WTC11 (cell line): ENCODE measurements at regions of chr14 and their contacts with region 1.

Region 1: DNA sequence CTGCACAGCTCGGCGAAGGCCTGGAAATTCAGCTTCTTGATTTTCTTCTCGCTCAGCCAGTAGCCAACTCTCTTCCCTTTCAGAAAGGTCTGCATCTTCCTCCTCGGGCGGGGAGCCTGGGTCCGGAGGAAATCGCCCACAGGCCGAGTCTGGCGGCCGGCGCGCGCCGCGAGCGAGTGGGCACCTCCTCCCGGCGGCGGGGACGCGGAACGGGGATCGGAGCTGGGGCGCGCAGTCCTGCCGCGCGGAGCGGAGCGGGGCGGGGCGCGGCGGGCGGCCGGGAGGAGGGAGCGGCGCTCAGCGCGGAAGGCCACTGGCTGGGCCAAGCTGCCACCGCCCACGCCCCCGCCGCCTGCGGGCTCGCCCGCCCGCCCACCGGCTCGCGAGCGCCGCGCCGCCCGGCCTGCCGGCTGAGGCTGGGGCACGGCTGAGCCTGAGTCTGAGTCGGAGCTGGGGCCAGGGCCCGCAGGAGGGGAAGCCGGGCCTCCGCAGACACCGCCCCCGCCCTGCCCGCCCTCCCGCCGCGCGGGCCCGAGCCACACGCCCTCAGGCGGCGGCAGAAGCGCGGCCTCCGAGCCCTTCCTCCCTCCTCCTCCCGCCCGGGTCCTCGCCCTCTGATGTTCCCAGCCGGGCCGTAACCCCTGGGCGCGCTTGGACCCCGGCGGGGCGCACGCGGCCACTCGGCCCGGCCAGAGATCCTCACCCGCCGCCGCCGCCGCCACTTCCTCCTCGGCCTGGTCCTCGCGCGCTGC is 480 bp downstream of the ITPK1 start:
- DNase-seq: peak; percentile 75
- ATAC-seq: peak; percentile 73
- H3K4me3 Mint-ChIP-seq: peak overlapping the region; percentile 86
- H3K27ac Mint-ChIP-seq: no peak overlapping the region
- H3K4me1 Mint-ChIP-seq: peaks cover 40% of the 10 kb centered on the region
- H3K27me3 Mint-ChIP-seq: no peaks in the 10 kb centered on the region; the same call in 1 of the 2 replicates
- CTCF ChIP-seq: no peak

Region 2: DNA sequence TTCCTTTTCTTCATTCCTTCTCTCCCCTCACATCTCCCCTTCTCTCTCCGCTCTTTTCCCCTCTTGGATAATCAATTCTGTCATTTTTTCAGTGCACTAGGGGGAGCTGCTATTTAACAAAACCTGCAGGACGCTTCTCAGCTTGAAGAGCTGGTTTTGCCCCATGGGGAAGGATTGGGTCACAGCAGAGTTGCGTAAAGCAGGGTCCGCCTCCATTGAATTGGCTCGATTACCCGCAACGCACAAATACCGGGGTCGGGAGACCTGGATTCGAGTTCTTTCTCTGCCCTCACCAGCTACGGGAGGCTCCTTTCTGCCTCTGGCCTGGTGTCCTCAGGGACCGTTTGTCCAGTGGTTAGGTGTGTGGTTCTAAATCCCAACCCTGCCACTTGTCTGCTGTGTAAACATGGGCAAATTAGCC is 234.4 kb before region 1 on chr14:
- CTCF ChIA-PET with region 1: interaction called, 11 read pairs
- POLR2A ChIA-PET with region 1: no interaction called
- DNase-seq: peak; percentile 55
- ATAC-seq: peak; percentile 90
- H3K4me3 Mint-ChIP-seq: peak overlapping the region; percentile 25
- H3K27ac Mint-ChIP-seq: no peak overlapping the region
- H3K4me1 Mint-ChIP-seq: peaks cover 22% of the 10 kb centered on the region
- H3K27me3 Mint-ChIP-seq: peaks cover 4% of the 10 kb centered on the region
- CTCF ChIP-seq: peak; percentile 26; the same call in 1 of the 2 replicates

Region 3: DNA sequence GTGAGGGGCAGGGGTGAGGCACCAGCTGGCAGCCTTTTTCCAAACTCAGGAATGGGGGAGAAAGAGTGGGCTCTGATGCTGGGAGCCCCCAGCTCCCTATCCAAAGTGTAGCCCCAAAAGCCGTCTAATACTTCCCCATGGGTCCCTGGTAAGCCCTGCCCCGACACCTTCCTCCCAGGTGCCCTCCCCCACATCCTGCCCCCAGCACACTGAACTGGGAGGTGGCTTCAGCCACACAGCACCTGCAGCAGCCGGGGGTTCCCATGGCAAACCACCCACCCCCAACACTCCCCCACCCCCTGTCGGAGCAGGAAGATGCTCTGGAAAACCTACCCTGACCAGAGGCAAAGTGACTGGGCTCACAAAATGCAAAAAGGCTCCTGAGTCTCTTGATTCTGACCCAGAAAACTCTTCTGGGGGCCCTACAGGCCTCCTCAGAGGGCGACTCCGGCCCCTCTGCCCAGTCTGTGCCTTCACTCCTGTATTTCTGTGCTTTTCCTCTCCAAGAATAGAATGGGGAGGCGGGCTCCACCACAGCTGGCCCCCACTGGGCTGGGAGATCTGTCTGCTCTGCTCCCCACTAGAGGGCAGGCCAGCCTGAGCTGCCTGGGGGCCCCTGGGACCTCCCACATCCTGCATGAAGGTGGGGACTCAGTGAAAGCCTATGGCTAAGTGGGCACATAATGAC is 81.1 kb before region 1 on chr14:
- CTCF ChIA-PET with region 1: interaction called, 29 read pairs
- POLR2A ChIA-PET with region 1: no interaction called
- DNase-seq: peak; percentile 66
- ATAC-seq: peak; percentile 68
- H3K4me3 Mint-ChIP-seq: no peak overlapping the region
- H3K27ac Mint-ChIP-seq: peak overlapping the region; percentile 8; the same call in 1 of the 2 replicates
- H3K4me1 Mint-ChIP-seq: peaks cover 66% of the 10 kb centered on the region
- H3K27me3 Mint-ChIP-seq: no peaks in the 10 kb centered on the region
- CTCF ChIP-seq: peak; percentile 11; the same call in 1 of the 2 replicates

Region 4: GRCh38 chr14:93059917-93060545 is 55.2 kb before region 1 on chr14:
- CTCF ChIA-PET with region 1: interaction called, 17 read pairs
- POLR2A ChIA-PET with region 1: no interaction called
- DNase-seq: peak; percentile 42
- ATAC-seq: peak; percentile 63
- H3K4me3 Mint-ChIP-seq: no peak overlapping the region
- H3K27ac Mint-ChIP-seq: peak overlapping the region; percentile 90
- H3K4me1 Mint-ChIP-seq: peaks cover 63% of the 10 kb centered on the region
- H3K27me3 Mint-ChIP-seq: no peaks in the 10 kb centered on the region
- CTCF ChIP-seq: no peak

Region 5: GRCh38 chr14:93137864-93138263 is 22.6 kb after region 1 on chr14:
- CTCF ChIA-PET with region 1: interaction called, 131 read pairs
- POLR2A ChIA-PET with region 1: interaction called, 3 read pairs
- DNase-seq: peak; percentile 35
- ATAC-seq: peak; percentile 64
- H3K4me3 Mint-ChIP-seq: no peak overlapping the region
- H3K27ac Mint-ChIP-seq: no peak overlapping the region
- H3K4me1 Mint-ChIP-seq: peaks cover 7% of the 10 kb centered on the region; the same call in 1 of the 2 replicates
- H3K27me3 Mint-ChIP-seq: no peaks in the 10 kb centered on the region; the same call in 1 of the 2 replicates
- CTCF ChIP-seq: no peak

Region 6: GRCh38 chr14:93184388-93185353 is 69.4 kb after region 1 on chr14 and contains the starts of genes LYSET and MOAP1:
- CTCF ChIA-PET with region 1: interaction called, 24 read pairs
- POLR2A ChIA-PET with region 1: interaction called, 8 read pairs
- DNase-seq: peak; percentile 89
- ATAC-seq: peak; percentile 88
- H3K4me3 Mint-ChIP-seq: peak within 1 kb of the TSS; percentile 96
- H3K27ac Mint-ChIP-seq: peak within 1 kb of the TSS; percentile 98
- H3K4me1 Mint-ChIP-seq: peaks cover 18% of the 10 kb centered on the region
- H3K27me3 Mint-ChIP-seq: no peaks in the 10 kb centered on the region
- CTCF ChIP-seq: no peak
- total RNA-seq, gene LYSET: 24.7 to 25.6 TPM (median 25.5 TPM) in 3 replicates
- total RNA-seq, gene MOAP1: 16.7 to 18.1 TPM (median 17.2 TPM) in 3 replicates